ENCODE measurements at regions of chr6 and their contacts with region 1.

Region 1: DNA sequence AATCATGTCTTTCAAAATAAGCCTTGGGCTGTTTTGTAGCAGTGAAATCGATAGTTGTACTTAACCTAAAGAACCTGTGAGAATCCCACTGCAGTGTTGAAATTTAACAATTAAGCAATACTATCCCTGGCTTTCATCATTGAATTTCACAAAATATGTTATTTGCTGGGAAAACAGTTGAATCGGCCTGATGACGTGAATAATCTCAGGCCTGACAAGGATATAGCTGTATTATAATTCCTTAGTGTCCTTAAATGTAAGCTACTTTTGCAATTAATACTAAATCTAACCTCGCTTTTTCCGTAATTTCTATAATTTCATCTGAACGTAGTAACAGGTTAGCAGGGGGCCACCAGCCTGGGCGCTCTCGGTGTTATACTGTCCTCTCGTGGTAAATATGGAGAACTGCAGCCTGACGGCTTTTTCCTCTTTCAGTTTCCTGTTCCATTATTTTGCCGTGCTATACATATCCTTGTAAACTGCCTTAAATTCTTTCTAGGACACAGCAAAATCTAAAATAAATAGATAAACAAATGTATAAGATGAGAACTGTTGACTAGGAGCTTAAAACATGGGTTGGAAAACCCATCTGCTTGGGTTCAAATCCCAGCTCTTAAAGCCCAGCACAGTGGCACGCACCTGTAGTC is 24.0 kb downstream of the MTFR2 start:
- DNase-seq: peak in 1 of 2 experiments; percentile 72
- H3K4me3 ChIP-seq: no peak overlapping the region
- H3K27ac ChIP-seq: no peak overlapping the region
- H3K4me1 ChIP-seq: no peaks in the 10 kb centered on the region
- H3K27me3 ChIP-seq: no peaks in the 10 kb centered on the region
- CTCF ChIP-seq: peak; percentile 74 to 97 (median 92)
- EP300 ChIP-seq: no peak
- POLR2A ChIP-seq: no peak
- RAD21 ChIP-seq: peak; percentile 100

Region 2: GRCh38 chr6:135451693-135452092 is 774.5 kb before region 1 on chr6:
- CTCF ChIA-PET with region 1: interaction called, 18 read pairs
- POLR2A ChIA-PET with region 1: no interaction called
- DNase-seq: no peak
- H3K4me3 ChIP-seq: no peak overlapping the region
- H3K27ac ChIP-seq: no peak overlapping the region
- H3K4me1 ChIP-seq: no peaks in the 10 kb centered on the region
- H3K27me3 ChIP-seq: no peaks in the 10 kb centered on the region
- CTCF ChIP-seq: peak in 2 of 3 experiments; percentile 41 to 59; a peak in 2 of 4 replicates
- EP300 ChIP-seq: no peak
- POLR2A ChIP-seq: no peak
- RAD21 ChIP-seq: peak; percentile 61 to 64

Region 3: GRCh38 chr6:135675862-135676261 is 550.3 kb before region 1 on chr6:
- CTCF ChIA-PET with region 1: interaction called, 27 read pairs
- POLR2A ChIA-PET with region 1: no interaction called
- DNase-seq: no peak
- H3K4me3 ChIP-seq: no peak overlapping the region
- H3K27ac ChIP-seq: no peak overlapping the region
- H3K4me1 ChIP-seq: no peaks in the 10 kb centered on the region
- H3K27me3 ChIP-seq: no peaks in the 10 kb centered on the region
- CTCF ChIP-seq: peak in 2 of 3 experiments; percentile 62 to 85; a peak in 3 of 4 replicates
- EP300 ChIP-seq: no peak
- POLR2A ChIP-seq: no peak
- RAD21 ChIP-seq: peak; percentile 94 to 98

Region 4: GRCh38 chr6:135938576-135939207 is 287.5 kb before region 1 on chr6:
- CTCF ChIA-PET with region 1: interaction called, 18 read pairs
- POLR2A ChIA-PET with region 1: no interaction called
- DNase-seq: no peak
- H3K4me3 ChIP-seq: no peak overlapping the region
- H3K27ac ChIP-seq: no peak overlapping the region
- H3K4me1 ChIP-seq: no peaks in the 10 kb centered on the region
- H3K27me3 ChIP-seq: no peaks in the 10 kb centered on the region
- CTCF ChIP-seq: peak in 2 of 3 experiments; percentile 50 to 54; a peak in 3 of 4 replicates
- EP300 ChIP-seq: no peak
- POLR2A ChIP-seq: no peak
- RAD21 ChIP-seq: peak; percentile 42 to 60

Region 5: GRCh38 chr6:136095986-136096385 is 130.2 kb before region 1 on chr6:
- CTCF ChIA-PET with region 1: no interaction called
- POLR2A ChIA-PET with region 1: no interaction called
- DNase-seq: no peak
- H3K4me3 ChIP-seq: no peak overlapping the region
- H3K27ac ChIP-seq: no peak overlapping the region
- H3K4me1 ChIP-seq: no peaks in the 10 kb centered on the region
- H3K27me3 ChIP-seq: peaks cover 0 to 2% (median 0%) of the 10 kb centered on the region in 4 experiments; a peak in 2 of 7 replicates
- CTCF ChIP-seq: no peak
- EP300 ChIP-seq: no peak
- POLR2A ChIP-seq: no peak
- RAD21 ChIP-seq: no peak

Region 6: DNA sequence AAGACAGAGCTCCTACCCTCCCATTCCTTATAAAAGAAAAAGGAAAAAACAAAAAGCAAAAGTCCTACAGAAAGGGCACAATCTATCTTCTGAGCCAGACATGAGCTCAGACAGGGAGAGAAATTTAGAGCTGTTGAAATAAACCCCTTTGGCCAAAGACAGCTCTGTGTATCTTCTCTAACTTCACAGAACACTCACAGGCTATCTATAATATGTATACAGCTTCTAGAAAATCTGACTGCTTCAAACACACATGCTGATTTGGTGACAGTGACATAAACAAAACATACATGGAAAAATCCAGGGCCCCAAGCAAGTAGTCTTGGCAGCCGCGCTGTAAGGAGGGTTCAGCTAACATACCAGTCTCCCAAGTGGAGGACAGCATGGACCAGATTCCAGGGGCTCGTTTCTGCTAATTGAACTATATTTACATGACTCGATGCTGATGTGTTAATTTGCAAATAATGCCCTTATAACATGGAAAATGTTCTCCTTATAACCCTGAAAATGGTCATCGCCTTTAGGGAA is 13.1 kb before region 1 on chr6:
- CTCF ChIA-PET with region 1: interaction called, 32 read pairs
- POLR2A ChIA-PET with region 1: no interaction called
- DNase-seq: no peak
- H3K4me3 ChIP-seq: no peak overlapping the region
- H3K27ac ChIP-seq: no peak overlapping the region
- H3K4me1 ChIP-seq: no peaks in the 10 kb centered on the region
- H3K27me3 ChIP-seq: no peaks in the 10 kb centered on the region
- CTCF ChIP-seq: no peak
- EP300 ChIP-seq: no peak
- POLR2A ChIP-seq: no peak
- RAD21 ChIP-seq: no peak

Region 7: DNA sequence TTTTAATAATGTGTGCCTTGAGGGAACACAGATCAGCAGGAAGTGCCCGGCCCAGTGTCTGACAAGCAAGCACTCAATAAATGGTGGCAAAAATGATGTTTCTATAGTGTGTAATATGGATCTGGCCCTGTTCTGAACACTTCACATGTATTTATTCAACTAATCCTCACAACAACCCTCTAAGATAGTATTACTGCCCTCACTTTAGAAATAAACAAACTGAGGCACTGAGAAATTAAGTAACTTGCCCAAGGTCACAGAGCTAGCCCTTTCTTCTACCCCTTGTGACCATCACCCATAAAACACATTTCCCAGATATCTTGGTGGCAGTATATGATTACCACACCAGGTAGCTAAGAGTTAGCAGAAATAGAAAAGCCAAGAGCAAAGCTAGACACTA is 36.8 kb after region 1 on chr6:
- CTCF ChIA-PET with region 1: no interaction called
- POLR2A ChIA-PET with region 1: no interaction called
- DNase-seq: no peak
- H3K4me3 ChIP-seq: no peak overlapping the region
- H3K27ac ChIP-seq: no peak overlapping the region
- H3K4me1 ChIP-seq: no peaks in the 10 kb centered on the region
- H3K27me3 ChIP-seq: no peaks in the 10 kb centered on the region
- CTCF ChIP-seq: no peak
- EP300 ChIP-seq: no peak
- POLR2A ChIP-seq: no peak
- RAD21 ChIP-seq: no peak

Region 8: GRCh38 chr6:136289579-136290409 is 63.6 kb after region 1 on chr6 and contains the start of gene BCLAF1:
- CTCF ChIA-PET with region 1: interaction called, 3 read pairs
- POLR2A ChIA-PET with region 1: interaction called, 11 read pairs
- DNase-seq: peak; percentile 98 to 99
- H3K4me3 ChIP-seq: peak within 1 kb of the TSS; percentile 85 to 100 (median 92)
- H3K27ac ChIP-seq: peak within 1 kb of the TSS; percentile 99
- H3K4me1 ChIP-seq: peaks cover 0 to 5% (median 2%) of the 10 kb centered on the region in 4 experiments; a peak in 4 of 7 replicates
- H3K27me3 ChIP-seq: no peaks in the 10 kb centered on the region
- CTCF ChIP-seq: no peak
- EP300 ChIP-seq: peak in 1 of 2 experiments; percentile 38; a peak in 1 of 3 replicates
- POLR2A ChIP-seq: peak; percentile 99 to 100
- RAD21 ChIP-seq: no peak
- total RNA-seq, gene BCLAF1: 230 and 231 TPM in 2 replicates

Region 9: DNA sequence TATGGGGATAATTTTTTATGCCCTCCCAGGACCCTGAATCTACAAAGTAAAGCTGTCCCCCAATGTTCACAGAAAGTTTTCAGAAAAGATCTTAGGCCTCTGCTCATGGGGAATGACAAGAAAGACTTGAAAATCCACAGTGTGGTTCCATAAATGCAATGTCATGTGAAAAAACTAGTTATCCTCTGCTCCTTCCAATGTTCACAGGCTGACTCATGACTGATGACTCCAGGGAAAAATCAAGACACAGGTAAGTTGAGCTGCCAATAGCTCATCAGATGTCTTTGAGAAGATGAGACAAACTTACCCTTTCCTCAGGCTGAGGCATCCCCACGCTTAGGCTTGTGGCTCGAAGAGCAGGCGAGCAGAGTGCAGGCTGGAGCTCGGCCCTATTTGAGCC is 78.3 kb after region 1 on chr6:
- CTCF ChIA-PET with region 1: no interaction called
- POLR2A ChIA-PET with region 1: no interaction called
- DNase-seq: no peak
- H3K4me3 ChIP-seq: no peak overlapping the region
- H3K27ac ChIP-seq: no peak overlapping the region
- H3K4me1 ChIP-seq: no peaks in the 10 kb centered on the region
- H3K27me3 ChIP-seq: no peaks in the 10 kb centered on the region
- CTCF ChIP-seq: no peak
- EP300 ChIP-seq: no peak
- POLR2A ChIP-seq: no peak
- RAD21 ChIP-seq: no peak

Region 10: GRCh38 chr6:136410201-136411027 is 184.3 kb after region 1 on chr6:
- CTCF ChIA-PET with region 1: no interaction called
- POLR2A ChIA-PET with region 1: no interaction called
- DNase-seq: no peak
- H3K4me3 ChIP-seq: no peak overlapping the region
- H3K27ac ChIP-seq: no peak overlapping the region
- H3K4me1 ChIP-seq: peaks cover 0 to 5% (median 1%) of the 10 kb centered on the region in 4 experiments; a peak in 1 of 7 replicates
- H3K27me3 ChIP-seq: no peaks in the 10 kb centered on the region
- CTCF ChIP-seq: no peak
- EP300 ChIP-seq: no peak
- POLR2A ChIP-seq: no peak
- RAD21 ChIP-seq: no peak

Measured in H1 (cell line).